B cell (primary cell): ENCODE measurements at regions of chr1 and their contacts with region 1.

Region 1: DNA sequence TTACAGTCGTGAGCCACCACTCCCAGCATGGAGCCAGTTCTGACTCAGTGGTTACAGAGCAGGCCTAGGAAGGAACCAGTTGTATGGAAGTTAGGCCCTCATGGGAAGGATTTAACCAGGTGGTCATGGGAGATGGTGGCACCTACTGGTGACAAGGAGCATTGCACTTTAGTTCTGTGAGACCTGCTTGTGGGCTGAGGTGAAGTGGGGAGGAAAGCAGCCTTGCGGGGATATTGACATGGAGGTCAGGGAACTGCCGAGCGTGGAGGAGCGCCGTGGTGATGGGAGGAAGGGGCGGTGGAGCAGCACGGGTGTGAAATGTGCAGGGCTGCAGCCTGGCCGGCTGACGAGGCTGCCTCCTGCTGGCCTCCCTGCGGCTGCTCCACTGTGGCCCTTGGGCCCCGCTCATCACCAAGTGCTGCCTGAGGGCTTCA is 100.4 kb downstream of the GALNT2 start:
- DNase-seq: peak; percentile 75
- ATAC-seq: peak; percentile 55
- H3K4me3 ChIP-seq: no peak overlapping the region
- H3K4me3 Mint-ChIP-seq: peak overlapping the region; percentile 11
- H3K27ac ChIP-seq: no peak overlapping the region
- H3K27ac Mint-ChIP-seq: peak overlapping the region; percentile 0
- H3K4me1 ChIP-seq: peaks cover 19 to 23% of the 10 kb centered on the region in 2 donors
- H3K4me1 Mint-ChIP-seq: peaks cover 51% of the 10 kb centered on the region
- H3K27me3 ChIP-seq: no peaks in the 10 kb centered on the region
- H3K27me3 Mint-ChIP-seq: no peaks in the 10 kb centered on the region
- CTCF ChIP-seq: peak; percentile 89

Region 2: GRCh38 chr1:229661022-229661877 is 506.2 kb before region 1 on chr1:
- CTCF ChIA-PET with region 1: interaction called, 38 read pairs
- POLR2A ChIA-PET with region 1: no interaction called
- intact Hi-C with region 1: loop called (anchors 1 kb)
- DNase-seq: peak; percentile 82
- ATAC-seq: peak; percentile 92
- H3K4me3 ChIP-seq: no peak overlapping the region
- H3K4me3 Mint-ChIP-seq: no peak overlapping the region
- H3K27ac ChIP-seq: no peak overlapping the region
- H3K27ac Mint-ChIP-seq: peak overlapping the region; percentile 34
- H3K4me1 ChIP-seq: peaks cover 19 to 22% of the 10 kb centered on the region in 2 donors
- H3K4me1 Mint-ChIP-seq: peaks cover 7% of the 10 kb centered on the region
- H3K27me3 ChIP-seq: no peaks in the 10 kb centered on the region
- H3K27me3 Mint-ChIP-seq: no peaks in the 10 kb centered on the region
- CTCF ChIP-seq: peak; percentile 92

Region 3: DNA sequence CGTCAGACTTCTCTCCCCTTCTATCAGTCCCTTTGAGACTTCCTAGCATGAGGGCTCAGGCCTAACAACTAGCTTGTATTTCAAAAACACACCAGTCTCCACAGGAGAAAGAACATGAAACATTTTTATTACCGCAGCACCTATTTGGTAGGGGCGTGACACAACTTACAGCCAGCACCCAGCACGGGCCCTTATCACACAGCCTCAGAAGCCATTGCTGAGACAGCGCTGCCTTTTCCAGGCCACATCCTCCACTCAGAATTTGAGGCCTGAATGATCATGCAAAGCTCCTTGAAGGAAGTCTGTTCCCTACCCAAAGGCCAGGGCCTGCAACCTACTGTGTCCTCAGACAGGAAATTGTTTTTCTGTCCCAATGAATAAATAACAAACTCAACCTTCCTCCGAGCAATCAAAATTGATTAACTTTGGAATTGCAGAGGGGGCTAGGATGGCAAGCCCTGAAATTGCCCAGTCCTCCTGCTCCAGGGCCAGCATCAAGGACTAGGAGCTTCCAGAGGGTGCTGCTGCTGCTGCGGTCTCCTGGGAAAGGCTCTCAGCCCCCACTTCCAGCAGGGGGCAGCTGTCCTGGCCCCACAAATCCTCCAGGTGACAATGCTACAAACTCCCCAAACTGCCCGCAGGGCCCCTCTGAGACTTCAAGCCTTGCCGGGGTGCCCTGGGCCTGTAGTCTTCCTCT is 194.7 kb before region 1 on chr1:
- CTCF ChIA-PET with region 1: no interaction called
- POLR2A ChIA-PET with region 1: no interaction called
- intact Hi-C with region 1: loop called (anchors 1 kb)
- DNase-seq: peak; percentile 27
- ATAC-seq: no peak
- H3K4me3 ChIP-seq: no peak overlapping the region
- H3K4me3 Mint-ChIP-seq: no peak overlapping the region
- H3K27ac ChIP-seq: no peak overlapping the region
- H3K27ac Mint-ChIP-seq: no peak overlapping the region
- H3K4me1 ChIP-seq: no peaks in the 10 kb centered on the region
- H3K4me1 Mint-ChIP-seq: no peaks in the 10 kb centered on the region
- H3K27me3 ChIP-seq: peaks cover 0 to 9% (median 0%) of the 10 kb centered on the region in 4 experiments
- H3K27me3 Mint-ChIP-seq: peaks cover 5% of the 10 kb centered on the region
- CTCF ChIP-seq: no peak

Region 4: DNA sequence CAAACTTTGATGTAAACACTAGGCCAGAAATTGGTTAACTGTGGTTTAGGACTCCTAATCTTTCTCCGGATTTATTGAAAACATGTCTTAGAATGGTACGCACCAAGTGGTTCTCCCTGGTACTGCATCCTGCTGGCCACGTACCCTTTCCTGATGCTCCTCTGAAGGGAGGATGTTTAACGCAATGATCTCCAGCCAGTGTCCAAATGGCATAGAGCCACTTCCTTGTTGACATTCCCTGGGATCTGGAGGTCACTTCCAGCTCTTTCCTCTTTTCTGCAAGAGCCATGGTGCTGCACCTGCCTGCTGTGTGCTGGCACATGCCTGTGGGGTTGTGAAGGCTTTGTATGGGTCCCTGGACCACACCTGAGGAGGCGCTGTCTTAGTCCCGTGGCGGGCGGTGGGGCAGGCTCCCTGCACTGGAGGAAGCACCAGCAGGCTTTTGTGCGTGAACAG is 46.5 kb before region 1 on chr1:
- CTCF ChIA-PET with region 1: interaction called, 8 read pairs
- POLR2A ChIA-PET with region 1: interaction called, 3 read pairs
- intact Hi-C with region 1: loop called (anchors 5 kb)
- DNase-seq: peak; percentile 49
- ATAC-seq: no peak
- H3K4me3 ChIP-seq: no peak overlapping the region
- H3K4me3 Mint-ChIP-seq: peak overlapping the region; percentile 16
- H3K27ac ChIP-seq: no peak overlapping the region
- H3K27ac Mint-ChIP-seq: no peak overlapping the region
- H3K4me1 ChIP-seq: peaks cover 55 to 75% of the 10 kb centered on the region in 2 donors
- H3K4me1 Mint-ChIP-seq: peaks cover 92% of the 10 kb centered on the region
- H3K27me3 ChIP-seq: no peaks in the 10 kb centered on the region
- H3K27me3 Mint-ChIP-seq: no peaks in the 10 kb centered on the region
- CTCF ChIP-seq: peak; percentile 73

Region 5: GRCh38 chr1:230132758-230133157 is 34.7 kb before region 1 on chr1:
- CTCF ChIA-PET with region 1: no interaction called
- POLR2A ChIA-PET with region 1: no interaction called
- intact Hi-C with region 1: no loop called
- DNase-seq: no peak
- ATAC-seq: no peak
- H3K4me3 ChIP-seq: no peak overlapping the region
- H3K4me3 Mint-ChIP-seq: no peak overlapping the region
- H3K27ac ChIP-seq: no peak overlapping the region
- H3K27ac Mint-ChIP-seq: peak overlapping the region; percentile 21
- H3K4me1 ChIP-seq: peaks cover 3 to 5% of the 10 kb centered on the region in 2 donors
- H3K4me1 Mint-ChIP-seq: peaks cover 46% of the 10 kb centered on the region
- H3K27me3 ChIP-seq: no peaks in the 10 kb centered on the region
- H3K27me3 Mint-ChIP-seq: no peaks in the 10 kb centered on the region
- CTCF ChIP-seq: no peak

Region 6: DNA sequence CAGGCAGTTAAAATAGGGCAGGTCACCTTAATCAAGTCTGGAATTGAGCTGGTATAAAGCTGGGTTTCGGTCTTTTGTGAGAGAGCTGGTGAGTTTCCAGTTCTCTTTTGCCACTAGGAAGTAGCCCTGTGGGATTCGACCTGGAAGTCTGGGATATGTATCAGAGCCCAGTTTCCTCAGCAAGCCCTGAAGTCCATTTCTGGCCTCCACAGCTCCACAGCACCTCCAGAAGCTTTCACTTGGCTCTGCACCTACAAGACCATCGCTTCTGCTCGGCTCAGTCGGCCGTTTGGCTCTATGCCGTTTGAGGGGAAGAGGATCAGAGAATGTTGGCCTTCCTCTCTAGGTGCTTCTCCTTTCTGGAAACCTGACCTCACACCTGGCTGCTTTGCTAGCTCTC is 47.6 kb after region 1 on chr1:
- CTCF ChIA-PET with region 1: interaction called, 6 read pairs
- POLR2A ChIA-PET with region 1: no interaction called
- intact Hi-C with region 1: loop called (anchors 5 kb)
- DNase-seq: peak; percentile 50
- ATAC-seq: no peak
- H3K4me3 ChIP-seq: no peak overlapping the region
- H3K4me3 Mint-ChIP-seq: peak overlapping the region; percentile 44
- H3K27ac ChIP-seq: peak overlapping the region; percentile 21 to 75
- H3K27ac Mint-ChIP-seq: peak overlapping the region; percentile 63
- H3K4me1 ChIP-seq: peaks cover 75 to 77% of the 10 kb centered on the region in 2 donors
- H3K4me1 Mint-ChIP-seq: peaks cover 89% of the 10 kb centered on the region
- H3K27me3 ChIP-seq: no peaks in the 10 kb centered on the region
- H3K27me3 Mint-ChIP-seq: no peaks in the 10 kb centered on the region
- CTCF ChIP-seq: no peak